ENCODE measurements at regions of chr5 and their contacts with region 1.

Region 1: DNA sequence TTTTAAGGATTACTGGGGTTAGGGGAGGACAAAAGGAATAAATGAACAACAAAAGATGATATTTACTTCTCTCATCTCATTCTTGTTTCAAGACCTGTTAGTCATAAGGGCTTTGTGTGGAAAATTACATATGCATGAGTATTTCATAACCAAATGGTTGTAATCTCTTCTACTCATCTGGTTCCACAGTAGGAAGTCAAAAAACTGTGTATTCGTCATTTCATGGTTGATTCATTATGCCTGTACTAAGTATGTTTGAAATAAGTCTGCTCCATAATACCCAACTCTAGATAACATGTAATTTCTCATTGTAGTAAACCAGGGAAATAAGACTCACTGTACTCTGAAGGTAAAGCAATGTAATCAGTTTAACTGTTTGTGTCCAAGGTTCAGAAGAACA is 212.9 kb downstream of the ARRDC3 start:
- DNase-seq: no peak
- ATAC-seq: peak; percentile 96
- H3K4me3 Mint-ChIP-seq: no peak overlapping the region
- H3K27ac Mint-ChIP-seq: peak overlapping the region; percentile 21
- H3K4me1 Mint-ChIP-seq: peaks cover 19% of the 10 kb centered on the region
- H3K27me3 Mint-ChIP-seq: peaks cover 2% of the 10 kb centered on the region

Region 2: DNA sequence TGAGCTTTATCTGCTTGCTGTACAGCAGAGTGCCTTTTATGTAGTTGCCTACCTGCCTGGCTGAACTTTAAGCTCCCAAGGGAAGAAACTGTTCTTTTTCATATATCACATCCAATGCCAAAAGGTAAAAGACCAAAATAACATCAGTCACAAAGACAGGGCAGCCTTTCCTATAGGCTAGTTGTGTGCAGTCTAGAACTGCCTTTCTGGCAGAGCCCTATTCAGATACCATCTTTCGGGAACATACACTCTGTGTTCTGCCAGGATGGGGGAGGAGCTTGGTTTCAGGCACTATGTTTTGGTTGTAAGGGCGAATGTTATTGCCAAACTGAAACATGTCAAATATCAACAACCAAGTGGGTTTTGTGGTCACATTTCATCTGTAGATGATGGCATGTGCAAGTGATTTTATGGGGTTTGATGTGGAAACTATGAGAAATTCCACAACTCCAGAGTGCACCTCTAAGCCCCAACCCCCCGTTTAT is 297.2 kb before region 1 on chr5:
- CTCF ChIA-PET with region 1: no interaction called
- POLR2A ChIA-PET with region 1: no interaction called
- intact Hi-C with region 1: loop called (anchors 1 to 10 kb)
- DNase-seq: peak; percentile 50
- ATAC-seq: peak; percentile 86
- H3K4me3 Mint-ChIP-seq: no peak overlapping the region
- H3K27ac Mint-ChIP-seq: no peak overlapping the region
- H3K4me1 Mint-ChIP-seq: peaks cover 30% of the 10 kb centered on the region
- H3K27me3 Mint-ChIP-seq: peaks cover 38% of the 10 kb centered on the region

Region 3: GRCh38 chr5:91059409-91059808 is 110.9 kb before region 1 on chr5:
- CTCF ChIA-PET with region 1: no interaction called
- POLR2A ChIA-PET with region 1: no interaction called
- intact Hi-C with region 1: loop called in 1 of 2 experiments (anchors 2 kb)
- DNase-seq: no peak
- ATAC-seq: peak; percentile 90
- H3K4me3 Mint-ChIP-seq: no peak overlapping the region
- H3K27ac Mint-ChIP-seq: no peak overlapping the region
- H3K4me1 Mint-ChIP-seq: peaks cover 25% of the 10 kb centered on the region
- H3K27me3 Mint-ChIP-seq: peaks cover 39% of the 10 kb centered on the region

Region 4: GRCh38 chr5:91280362-91281269 is 110.3 kb after region 1 on chr5:
- CTCF ChIA-PET with region 1: no interaction called
- POLR2A ChIA-PET with region 1: interaction called, 6 read pairs
- intact Hi-C with region 1: loop called (anchors 1 kb)
- DNase-seq: peak; percentile 97
- ATAC-seq: peak; percentile 80
- H3K4me3 Mint-ChIP-seq: peak overlapping the region; percentile 76
- H3K27ac Mint-ChIP-seq: peak overlapping the region; percentile 99
- H3K4me1 Mint-ChIP-seq: peaks cover 53% of the 10 kb centered on the region
- H3K27me3 Mint-ChIP-seq: no peaks in the 10 kb centered on the region

Measured in activated CD4-positive, alpha-beta T cell treated with anti-CD3 and anti-CD28 coated beads for 36 hours (primary cell).